ENCODE measurements at regions of chr4 and their contacts with region 1.

Region 1: GRCh38 chr4:172850838-172851237 is 317.8 kb upstream of the GALNT7 start:
- DNase-seq: peak; percentile 74
- H3K4me3 ChIP-seq: no peak overlapping the region
- H3K27ac ChIP-seq: no peak overlapping the region
- H3K4me1 ChIP-seq: peaks cover 3% of the 10 kb centered on the region
- H3K27me3 ChIP-seq: no peaks in the 10 kb centered on the region
- CTCF ChIP-seq: no peak

Region 2: DNA sequence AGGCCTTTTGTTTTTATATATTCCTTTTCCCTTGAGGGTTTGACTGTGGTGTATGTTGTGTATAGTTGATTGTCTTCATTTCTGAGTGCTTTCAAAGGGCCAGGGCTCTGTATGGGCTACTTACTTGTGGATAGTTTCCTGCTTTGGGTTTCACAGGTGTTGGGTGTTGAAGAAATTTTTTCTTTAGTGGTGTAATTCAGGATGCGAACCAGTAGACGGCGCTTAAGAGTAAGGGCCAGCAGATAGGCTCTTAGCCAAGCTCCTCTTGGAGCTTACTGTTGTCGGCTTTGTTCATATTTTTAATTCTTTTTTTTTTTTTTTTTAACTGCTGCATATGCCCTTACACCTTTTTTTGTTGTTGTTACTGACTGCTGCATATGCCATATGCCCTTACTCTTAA is 41.5 kb after region 1 on chr4:
- CTCF ChIA-PET with region 1: no interaction called
- POLR2A ChIA-PET with region 1: interaction called, 10 read pairs
- intact Hi-C with region 1: no loop called
- DNase-seq: peak; percentile 45
- H3K4me3 ChIP-seq: no peak overlapping the region
- H3K27ac ChIP-seq: no peak overlapping the region
- H3K4me1 ChIP-seq: no peaks in the 10 kb centered on the region
- H3K27me3 ChIP-seq: no peaks in the 10 kb centered on the region
- CTCF ChIP-seq: peak; percentile 68

Measured in A673 (cell line).